ENCODE measurements at regions of chr11 and their contacts with region 1.

Region 1: GRCh38 chr11:10792398-10792975 is 16.2 kb downstream of the EIF4G2 start:
- DNase-seq: no peak
- H3K4me3 ChIP-seq: no peak overlapping the region
- H3K27me3 ChIP-seq: 0 out of 2 replicates have a peak, but pooled peaks cover 1% of the 10 kb centered on the region
- CTCF ChIP-seq: peak; percentile 97

Region 2: GRCh38 chr11:10770626-10771254 is 21.7 kb before region 1 on chr11:
- CTCF ChIA-PET with region 1: interaction called, 16 read pairs
- POLR2A ChIA-PET with region 1: no interaction called
- DNase-seq: no peak
- H3K4me3 ChIP-seq: no peak overlapping the region
- H3K27me3 ChIP-seq: no peaks in the 10 kb centered on the region
- CTCF ChIP-seq: peak; percentile 83

Region 3: DNA sequence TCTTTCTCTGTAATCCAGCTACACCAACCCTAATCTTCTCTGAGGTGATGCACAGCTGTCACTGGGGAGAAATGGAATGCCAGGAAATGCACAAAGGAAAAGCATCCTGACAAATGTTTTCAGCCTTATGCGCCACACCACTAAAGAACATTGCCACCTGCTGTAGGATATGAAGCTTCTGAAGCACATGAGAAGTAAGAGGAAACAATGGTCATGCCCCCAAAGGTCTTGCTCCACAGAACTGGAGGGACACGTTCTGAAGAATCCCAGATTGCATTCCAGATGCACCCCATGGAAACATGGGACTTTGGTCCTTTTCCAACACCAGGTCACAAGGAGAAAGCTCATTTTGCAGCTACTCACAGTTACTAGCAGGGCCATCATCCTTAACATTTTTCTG is 114.0 kb after region 1 on chr11:
- CTCF ChIA-PET with region 1: interaction called, 18 read pairs
- POLR2A ChIA-PET with region 1: no interaction called
- DNase-seq: peak; percentile 56
- H3K4me3 ChIP-seq: no peak overlapping the region
- H3K27me3 ChIP-seq: no peaks in the 10 kb centered on the region
- CTCF ChIP-seq: peak; percentile 31; the same call in 1 of the 2 replicates

Region 4: GRCh38 chr11:11010624-11011127 is 218.2 kb after region 1 on chr11:
- CTCF ChIA-PET with region 1: interaction called, 12 read pairs
- POLR2A ChIA-PET with region 1: no interaction called
- DNase-seq: no peak
- H3K4me3 ChIP-seq: no peak overlapping the region
- H3K27me3 ChIP-seq: peaks cover 16% of the 10 kb centered on the region
- CTCF ChIP-seq: peak; percentile 24

Region 5: DNA sequence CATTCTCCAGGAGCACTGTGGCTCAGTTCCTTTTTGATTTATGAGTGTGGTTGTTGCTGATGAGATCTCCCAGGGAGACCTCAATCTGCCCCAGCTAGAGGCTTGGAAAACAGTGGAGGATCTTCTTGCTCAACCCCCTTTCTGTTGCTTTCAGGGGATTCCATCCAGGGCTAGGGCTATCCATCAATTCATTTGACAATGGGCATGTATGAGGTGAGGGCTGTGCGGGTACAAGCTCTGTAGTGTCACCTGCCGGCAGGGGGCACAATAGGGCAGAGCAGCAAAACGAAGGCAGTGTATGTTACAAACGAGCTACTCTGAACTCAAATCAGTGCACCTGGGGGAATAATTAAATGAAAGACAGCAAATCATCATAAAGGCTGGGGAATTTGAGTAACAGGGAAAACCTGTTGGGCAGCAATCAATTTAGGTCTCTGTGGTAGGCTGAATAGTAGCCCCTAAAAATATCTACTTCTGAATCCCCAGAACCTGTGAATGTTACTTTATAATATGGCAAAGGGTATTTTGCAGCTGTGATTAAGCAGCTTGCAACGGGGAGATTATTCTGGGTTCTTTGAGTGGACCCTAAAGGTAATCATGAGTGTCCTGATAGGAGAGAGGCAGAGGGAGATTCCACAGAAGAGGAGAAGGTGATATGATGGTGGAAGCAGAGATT is 235.7 kb after region 1 on chr11:
- CTCF ChIA-PET with region 1: interaction called, 195 read pairs
- POLR2A ChIA-PET with region 1: no interaction called
- DNase-seq: no peak
- H3K4me3 ChIP-seq: no peak overlapping the region
- H3K27me3 ChIP-seq: no peaks in the 10 kb centered on the region
- CTCF ChIP-seq: peak; percentile 85

Region 6: DNA sequence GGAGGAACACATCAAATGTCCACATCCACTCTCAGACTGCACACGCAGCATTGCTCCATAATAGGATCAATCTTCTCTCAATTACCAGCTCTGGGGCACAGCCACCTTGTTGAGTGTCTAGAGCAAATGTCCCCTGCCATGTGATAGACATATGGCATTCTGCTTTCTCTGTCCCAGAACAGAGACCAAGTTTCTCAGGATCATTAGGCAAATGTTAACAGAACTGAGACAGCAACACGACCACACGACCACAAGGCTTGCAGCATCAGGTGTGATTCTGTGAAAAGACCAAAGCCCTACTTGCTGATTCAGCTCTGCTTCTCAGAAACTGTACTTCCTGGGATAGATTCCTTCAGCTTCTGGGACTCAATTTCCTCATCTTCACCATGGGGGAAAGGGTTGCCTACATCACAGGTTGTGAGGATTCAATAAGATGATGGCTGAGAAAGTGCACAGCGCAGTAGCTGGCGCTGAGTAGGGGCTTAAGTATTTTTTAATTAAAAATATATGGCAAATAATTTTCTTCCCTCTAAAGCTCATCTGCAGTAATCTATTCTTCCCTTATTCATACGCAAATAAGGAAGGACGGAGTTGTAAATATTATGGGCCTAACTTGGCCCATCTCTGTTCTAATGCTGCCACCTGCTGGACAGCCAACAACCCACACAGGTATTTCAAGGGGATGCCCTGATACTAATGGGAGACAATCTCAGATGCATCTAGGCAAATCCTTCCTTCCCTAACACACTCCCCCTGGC is 995.0 kb after region 1 on chr11:
- CTCF ChIA-PET with region 1: interaction called, 37 read pairs
- POLR2A ChIA-PET with region 1: no interaction called
- DNase-seq: no peak
- H3K4me3 ChIP-seq: no peak overlapping the region
- H3K27me3 ChIP-seq: 0 out of 2 replicates have a peak, but pooled peaks cover 2% of the 10 kb centered on the region
- CTCF ChIP-seq: peak; percentile 77

Measured in BJ (cell line).